Stomach (tissue), 19 donors: ENCODE measurements at regions of chr11 and their contacts with region 1.

Region 1: DNA sequence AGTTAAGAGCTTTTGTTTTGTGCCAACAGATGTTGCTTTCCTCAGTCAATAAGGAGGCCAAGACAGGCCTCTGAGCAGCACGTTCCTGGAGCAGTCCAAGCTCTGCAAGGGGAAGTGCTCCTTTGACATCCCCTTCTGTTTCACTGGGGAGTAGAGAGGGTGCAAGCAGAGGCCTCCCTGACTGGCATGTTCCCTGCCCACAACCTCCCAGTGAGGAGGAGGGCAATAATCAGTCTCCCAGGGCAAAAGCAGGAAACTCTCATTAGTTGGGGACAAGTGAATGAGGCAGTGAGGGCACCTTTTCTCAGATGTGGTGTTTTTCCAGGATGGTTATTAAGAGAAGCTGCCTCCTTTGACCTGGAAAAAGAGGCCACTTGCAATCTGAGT is 79.5 kb upstream of the ZBED5 start:
- DNase-seq: no peak
- H3K4me3 ChIP-seq: no peak overlapping the region
- H3K27ac ChIP-seq: no peak overlapping the region
- H3K4me1 ChIP-seq: peaks cover 0 to 26% (median 15%) of the 10 kb centered on the region in 4 donors
- H3K27me3 ChIP-seq: peaks cover 0 to 7% (median 0%) of the 10 kb centered on the region in 3 donors
- CTCF ChIP-seq: no peak
- EP300 ChIP-seq: no peak
- POLR2A ChIP-seq: no peak

Region 2: GRCh38 chr11:10108915-10109680 is 828.3 kb before region 1 on chr11:
- intact Hi-C with region 1: no loop called
- DNase-seq: peak in 1 of 2 donors; percentile 82
- H3K4me3 ChIP-seq: no peak overlapping the region
- H3K27ac ChIP-seq: peak overlapping the region in 3 of 5 donors; percentile 23 to 43 (median 25)
- H3K4me1 ChIP-seq: peaks cover 0 to 28% (median 12%) of the 10 kb centered on the region in 4 donors
- H3K27me3 ChIP-seq: no peaks in the 10 kb centered on the region
- CTCF ChIP-seq: no peak
- EP300 ChIP-seq: no peak
- POLR2A ChIP-seq: no peak

Region 3: GRCh38 chr11:10792398-10792975 is 144.9 kb before region 1 on chr11:
- intact Hi-C with region 1: no loop called
- DNase-seq: peak; percentile 89 to 92
- H3K4me3 ChIP-seq: peak overlapping the region in 1 of 4 donors; percentile 23
- H3K27ac ChIP-seq: no peak overlapping the region
- H3K4me1 ChIP-seq: peaks cover 0 to 28% (median 10%) of the 10 kb centered on the region in 4 donors
- H3K27me3 ChIP-seq: no peaks in the 10 kb centered on the region
- CTCF ChIP-seq: peak in 5 of 7 experiments; percentile 83 to 93 (median 89)
- EP300 ChIP-seq: no peak
- POLR2A ChIP-seq: no peak

Region 4: DNA sequence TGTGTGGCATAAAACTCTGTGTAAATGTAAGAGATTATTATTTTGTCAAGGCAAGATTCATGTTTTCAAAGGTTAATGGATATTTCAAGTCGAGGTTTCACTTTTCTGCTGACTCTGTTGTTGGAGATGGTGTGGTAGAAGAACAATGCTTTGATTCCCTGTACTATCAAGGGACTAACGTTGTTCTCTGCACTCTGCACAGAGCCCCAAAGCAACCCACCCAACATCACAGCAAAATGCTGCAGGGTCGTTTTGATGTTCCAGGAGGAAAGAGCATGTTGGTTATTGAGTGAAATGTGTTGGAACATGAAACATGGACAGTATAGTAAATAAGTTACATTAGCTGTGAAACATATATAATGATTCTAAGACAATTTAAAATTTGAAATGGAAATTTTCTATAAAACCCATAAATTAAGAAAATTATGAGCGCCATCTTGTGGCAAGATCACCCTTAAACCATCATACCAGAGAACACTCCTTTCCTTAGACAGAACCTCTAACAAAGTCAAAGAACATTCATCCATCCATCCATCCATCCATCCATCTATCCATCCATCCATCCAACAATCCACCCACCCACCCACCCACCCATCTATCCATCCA is 84.8 kb after region 1 on chr11:
- intact Hi-C with region 1: loop called (anchors 5 kb)
- DNase-seq: peak in 1 of 2 donors; percentile 57
- H3K4me3 ChIP-seq: no peak overlapping the region
- H3K27ac ChIP-seq: no peak overlapping the region
- H3K4me1 ChIP-seq: no peaks in the 10 kb centered on the region
- H3K27me3 ChIP-seq: no peaks in the 10 kb centered on the region
- CTCF ChIP-seq: peak in 3 of 7 experiments; percentile 15 to 64 (median 49)
- EP300 ChIP-seq: no peak
- POLR2A ChIP-seq: no peak